CD4-positive, alpha-beta T cell (primary cell): ENCODE measurements at regions of chr6 and their contacts with region 1.

Region 1: GRCh38 chr6:42043787-42044475 is 6.4 kb upstream of the TAF8 start:
- DNase-seq: peak; percentile 88 to 96 (median 92)
- ATAC-seq: peak; percentile 31
- H3K4me3 ChIP-seq: peak overlapping the region; percentile 45
- H3K4me3 Mint-ChIP-seq: peak overlapping the region; percentile 87
- H3K27ac ChIP-seq: peak overlapping the region; percentile 5 to 57
- H3K27ac Mint-ChIP-seq: peak overlapping the region; percentile 89
- H3K4me1 ChIP-seq: peaks cover 86% of the 10 kb centered on the region
- H3K4me1 Mint-ChIP-seq: peaks cover 84% of the 10 kb centered on the region
- H3K27me3 ChIP-seq: no peaks in the 10 kb centered on the region
- H3K27me3 Mint-ChIP-seq: no peaks in the 10 kb centered on the region
- CTCF ChIP-seq: peak; percentile 89

Region 2: DNA sequence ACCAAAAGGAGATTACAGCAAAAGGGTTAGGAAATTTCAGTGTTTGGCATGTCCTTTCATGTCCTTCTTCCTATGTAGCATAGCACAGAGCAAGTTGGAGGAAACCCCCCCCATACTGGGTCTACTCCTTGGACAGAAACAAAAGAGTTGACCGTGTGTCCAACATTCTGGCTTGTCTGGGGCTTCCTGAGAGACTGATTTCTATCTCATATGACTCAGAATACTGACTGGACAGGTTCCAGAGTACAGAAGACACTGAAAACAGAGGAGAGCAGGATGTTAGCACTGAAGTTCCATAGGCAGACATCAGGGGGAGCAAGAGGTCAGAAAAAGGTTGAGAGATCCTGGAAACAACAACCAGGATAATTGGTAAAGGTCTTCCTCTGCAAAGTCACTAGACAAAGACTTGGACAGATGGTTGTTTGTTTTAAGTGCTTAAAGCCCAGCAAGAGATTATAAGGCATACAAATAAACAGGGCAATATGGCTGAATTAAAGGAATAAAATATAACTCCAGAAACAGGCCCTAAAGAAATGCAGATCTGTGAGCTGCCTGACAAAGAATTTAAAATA is 197.2 kb before region 1 on chr6:
- CTCF ChIA-PET with region 1: interaction called, 9 read pairs
- POLR2A ChIA-PET with region 1: no interaction called
- intact Hi-C with region 1: loop called (anchors 1 kb)
- DNase-seq: peak; percentile 18 to 77 (median 37)
- ATAC-seq: peak; percentile 78
- H3K4me3 ChIP-seq: no peak overlapping the region
- H3K4me3 Mint-ChIP-seq: no peak overlapping the region
- H3K27ac ChIP-seq: no peak overlapping the region
- H3K27ac Mint-ChIP-seq: no peak overlapping the region
- H3K4me1 ChIP-seq: no peaks in the 10 kb centered on the region
- H3K4me1 Mint-ChIP-seq: peaks cover 6% of the 10 kb centered on the region
- H3K27me3 ChIP-seq: no peaks in the 10 kb centered on the region
- H3K27me3 Mint-ChIP-seq: no peaks in the 10 kb centered on the region
- CTCF ChIP-seq: peak; percentile 91

Region 3: GRCh38 chr6:41920921-41921711 is 122.8 kb before region 1 on chr6 and contains the starts of genes BYSL and MED20:
- CTCF ChIA-PET with region 1: interaction called, 70 read pairs
- POLR2A ChIA-PET with region 1: interaction called, 30 read pairs
- intact Hi-C with region 1: loop called (anchors 1 to 2 kb)
- DNase-seq: peak; percentile 89 to 97 (median 93)
- ATAC-seq: peak; percentile 90
- H3K4me3 ChIP-seq: peak within 1 kb of the TSS; percentile 78
- H3K4me3 Mint-ChIP-seq: peak within 1 kb of the TSS; percentile 99
- H3K27ac ChIP-seq: peak within 1 kb of the TSS; percentile 97 to 98
- H3K27ac Mint-ChIP-seq: peak within 1 kb of the TSS; percentile 94
- H3K4me1 ChIP-seq: peaks cover 31% of the 10 kb centered on the region
- H3K4me1 Mint-ChIP-seq: peaks cover 55% of the 10 kb centered on the region
- H3K27me3 ChIP-seq: no peaks in the 10 kb centered on the region
- H3K27me3 Mint-ChIP-seq: no peaks in the 10 kb centered on the region
- CTCF ChIP-seq: peak; percentile 97
- total RNA-seq, gene BYSL: 1.2 to 1.6 TPM
- total RNA-seq, gene MED20: 1.3 to 1.6 TPM

Region 4: GRCh38 chr6:42009966-42010891 is 33.7 kb before region 1 on chr6:
- CTCF ChIA-PET with region 1: interaction called, 6 read pairs
- POLR2A ChIA-PET with region 1: interaction called, 10 read pairs
- intact Hi-C with region 1: loop called in 1 of 2 experiments (anchors 5 kb)
- DNase-seq: peak in 5 of 14 experiments; percentile 24 to 39 (median 30)
- ATAC-seq: peak; percentile 57
- H3K4me3 ChIP-seq: no peak overlapping the region
- H3K4me3 Mint-ChIP-seq: peak overlapping the region; percentile 56
- H3K27ac ChIP-seq: peak overlapping the region; percentile 48 to 59
- H3K27ac Mint-ChIP-seq: peak overlapping the region; percentile 92
- H3K4me1 ChIP-seq: peaks cover 74% of the 10 kb centered on the region
- H3K4me1 Mint-ChIP-seq: peaks cover 84% of the 10 kb centered on the region
- H3K27me3 ChIP-seq: no peaks in the 10 kb centered on the region
- H3K27me3 Mint-ChIP-seq: no peaks in the 10 kb centered on the region
- CTCF ChIP-seq: no peak

Region 5: GRCh38 chr6:42166444-42167141 is 122.7 kb after region 1 on chr6:
- CTCF ChIA-PET with region 1: no interaction called
- POLR2A ChIA-PET with region 1: no interaction called
- intact Hi-C with region 1: loop called in 1 of 2 experiments (anchors 1 kb)
- DNase-seq: peak; percentile 61 to 85 (median 72)
- ATAC-seq: peak; percentile 98
- H3K4me3 ChIP-seq: no peak overlapping the region
- H3K4me3 Mint-ChIP-seq: no peak overlapping the region
- H3K27ac ChIP-seq: no peak overlapping the region
- H3K27ac Mint-ChIP-seq: no peak overlapping the region
- H3K4me1 ChIP-seq: peaks cover 6% of the 10 kb centered on the region
- H3K4me1 Mint-ChIP-seq: peaks cover 6% of the 10 kb centered on the region
- H3K27me3 ChIP-seq: peaks cover 0 to 2% of the 10 kb centered on the region in 2 experiments
- H3K27me3 Mint-ChIP-seq: peaks cover 6% of the 10 kb centered on the region
- CTCF ChIP-seq: peak; percentile 83

Region 6: DNA sequence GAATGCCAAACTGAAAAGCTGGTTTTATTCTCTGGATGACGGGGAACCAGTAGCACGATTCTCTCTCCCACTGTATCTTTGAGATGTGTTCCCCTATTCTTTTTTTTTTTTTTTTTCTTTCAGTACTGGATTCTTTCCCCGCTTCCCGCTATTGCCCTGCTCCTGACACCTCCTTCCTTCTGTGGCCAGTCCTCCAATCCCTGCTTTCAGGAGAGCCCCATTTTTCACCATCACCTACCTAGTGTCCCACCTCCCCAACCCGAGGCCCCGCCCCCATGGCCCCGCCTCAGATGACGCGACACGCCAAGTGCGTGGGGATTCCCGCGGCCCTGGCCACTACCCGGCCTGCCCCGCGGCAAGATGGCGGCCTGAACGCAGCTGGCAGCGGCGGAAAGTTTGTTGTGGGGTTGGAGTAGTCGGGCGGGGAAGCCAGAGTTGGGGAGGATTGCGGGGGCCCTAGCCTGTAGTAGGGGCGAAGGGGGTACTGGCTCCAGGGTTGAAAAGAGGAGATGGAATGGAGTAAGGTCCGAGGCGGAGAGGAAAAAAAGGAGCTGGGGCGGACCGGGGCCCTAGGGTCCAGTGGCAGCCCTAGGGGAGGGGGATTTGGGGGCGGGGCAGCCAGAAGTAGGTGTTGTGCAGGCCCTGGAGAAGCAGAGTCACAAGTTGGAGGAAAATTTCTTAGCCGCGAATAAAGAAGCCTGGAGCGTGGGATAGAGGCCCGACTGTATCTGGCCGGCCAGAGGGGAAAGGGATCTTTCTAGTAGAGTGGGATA is 1433.5 kb after region 1 on chr6 and contains the start of gene TJAP1:
- CTCF ChIA-PET with region 1: no interaction called
- POLR2A ChIA-PET with region 1: no interaction called
- intact Hi-C with region 1: no loop called
- DNase-seq: peak; percentile 91 to 99 (median 96)
- ATAC-seq: peak; percentile 100
- H3K4me3 ChIP-seq: peak within 1 kb of the TSS; percentile 81
- H3K4me3 Mint-ChIP-seq: peak within 1 kb of the TSS; percentile 94
- H3K27ac ChIP-seq: peak within 1 kb of the TSS; percentile 81 to 91
- H3K27ac Mint-ChIP-seq: peak within 1 kb of the TSS; percentile 96
- H3K4me1 ChIP-seq: peaks cover 32% of the 10 kb centered on the region
- H3K4me1 Mint-ChIP-seq: peaks cover 46% of the 10 kb centered on the region
- H3K27me3 ChIP-seq: no peaks in the 10 kb centered on the region
- H3K27me3 Mint-ChIP-seq: no peaks in the 10 kb centered on the region
- CTCF ChIP-seq: no peak
- total RNA-seq, gene TJAP1: 23.6 to 24.4 TPM